Activated T-helper 2 cell treated with anti-CD3 and anti-CD28 coated beads, Interferon-gamma antibody, Interleukin-2, Interleukin-4, amounts not matched to agents 10 μg/mL and 5 μg/mL and 100 μg/mL, durations not matched to agents 14 hours and 24 hours and 36 hours (primary cell): ENCODE measurements at regions of chr4 and their contacts with region 1.

Region 1: GRCh38 chr4:151099229-151099975 is at the start of gene RPS3A:
- DNase-seq: peak; percentile 98
- H3K4me3 Mint-ChIP-seq: peak within 1 kb of the TSS; percentile 98
- H3K27ac Mint-ChIP-seq: peak within 1 kb of the TSS; percentile 97
- H3K4me1 Mint-ChIP-seq: peaks cover 45% of the 10 kb centered on the region
- H3K27me3 Mint-ChIP-seq: no peaks in the 10 kb centered on the region
- total RNA-seq, gene RPS3A: 1,827 and 1,844 TPM in 2 replicates

Region 2: DNA sequence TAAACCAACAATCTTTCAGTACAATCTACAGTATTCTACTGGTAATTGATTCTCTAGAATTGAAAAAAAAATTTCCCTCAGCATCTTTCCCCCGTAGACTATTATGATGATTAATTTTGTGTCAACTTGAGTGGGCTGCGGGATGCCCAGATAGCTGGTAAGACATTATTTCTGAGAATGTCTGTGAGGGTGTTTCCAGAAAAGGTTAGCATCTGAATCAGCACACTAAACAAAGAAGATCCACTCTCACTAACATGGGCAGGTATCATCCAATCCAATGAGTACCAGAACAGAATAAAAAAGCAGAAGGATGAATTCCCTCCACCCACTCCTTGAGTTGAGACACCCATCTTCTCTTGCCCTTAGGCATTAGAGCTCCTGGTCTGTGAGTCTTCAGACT is 703.5 kb before region 1 on chr4:
- intact Hi-C with region 1: loop called (anchors 5 kb)
- DNase-seq: no peak
- H3K4me3 Mint-ChIP-seq: no peak overlapping the region
- H3K27ac Mint-ChIP-seq: peak overlapping the region; percentile 84
- H3K4me1 Mint-ChIP-seq: peaks cover 17% of the 10 kb centered on the region
- H3K27me3 Mint-ChIP-seq: no peaks in the 10 kb centered on the region

Region 3: DNA sequence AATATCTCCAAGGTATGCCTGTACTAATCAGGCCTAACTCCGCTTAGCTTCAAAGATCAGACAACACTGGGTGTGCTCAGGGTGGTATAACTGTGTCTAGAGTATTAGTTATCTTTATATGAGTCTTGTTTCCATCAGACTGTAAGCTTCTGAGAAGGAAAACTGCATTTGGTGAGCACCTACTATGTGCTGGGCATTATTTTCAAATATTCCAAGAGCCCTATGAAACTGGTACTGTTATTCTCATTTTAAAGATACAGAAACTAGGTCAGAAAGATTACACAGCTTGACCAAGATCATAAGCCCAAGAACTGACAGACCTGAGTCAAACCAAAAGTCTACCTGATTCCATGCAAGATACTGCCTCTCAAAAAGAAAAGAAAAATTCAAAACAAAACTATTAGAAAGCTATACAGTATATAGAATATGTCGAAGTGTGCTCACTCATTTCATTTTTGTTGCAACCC is 128.7 kb before region 1 on chr4:
- intact Hi-C with region 1: loop called (anchors 2 kb)
- DNase-seq: no peak
- H3K4me3 Mint-ChIP-seq: no peak overlapping the region
- H3K27ac Mint-ChIP-seq: peak overlapping the region; percentile 68
- H3K4me1 Mint-ChIP-seq: peaks cover 40% of the 10 kb centered on the region
- H3K27me3 Mint-ChIP-seq: no peaks in the 10 kb centered on the region

Region 4: DNA sequence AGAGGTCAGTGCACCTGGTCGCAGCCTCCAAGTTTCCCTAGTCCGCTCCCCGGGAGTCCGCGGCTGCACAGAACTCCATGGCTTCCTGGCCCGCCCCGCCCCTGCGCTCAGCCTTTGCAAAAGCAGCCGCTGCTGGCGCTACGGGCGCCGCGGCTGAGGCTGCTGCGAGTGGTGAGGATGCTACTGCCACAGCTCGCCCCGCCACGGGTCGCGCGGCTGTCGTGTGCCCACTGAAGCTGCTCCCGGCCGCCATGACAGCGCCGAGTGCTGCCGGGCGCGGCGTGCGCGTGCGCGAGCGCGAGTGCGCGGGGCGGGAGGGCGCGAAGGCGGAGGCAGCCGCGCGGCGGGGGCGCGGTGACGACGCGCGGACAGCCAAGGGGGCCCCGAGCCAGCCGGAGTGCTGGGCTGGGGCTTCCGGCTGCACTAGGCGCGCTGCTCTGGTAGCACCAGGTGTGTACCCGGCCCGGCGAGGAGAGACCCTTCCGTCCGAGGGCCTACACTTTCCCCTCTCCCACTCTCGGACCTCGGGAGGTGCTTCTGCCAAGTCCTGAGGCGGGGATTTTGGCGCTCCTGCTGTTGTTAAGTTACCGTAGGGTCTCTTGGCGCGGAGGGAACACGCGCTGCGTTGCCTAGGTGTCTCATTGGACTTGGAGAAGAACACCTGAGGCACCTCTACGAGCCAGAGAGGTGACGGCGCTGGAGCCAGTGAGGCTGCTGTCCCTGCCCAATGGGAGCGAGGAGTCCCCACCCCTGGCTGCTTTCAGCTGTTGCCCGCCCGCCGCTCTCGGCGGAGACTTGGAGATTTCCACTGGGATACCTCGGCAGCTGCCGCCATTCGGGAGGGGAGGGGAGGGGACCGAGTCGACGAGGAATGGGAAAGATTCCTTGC is 83.7 kb before region 1 on chr4:
- intact Hi-C with region 1: loop called (anchors 1 kb)
- DNase-seq: peak; percentile 76
- H3K4me3 Mint-ChIP-seq: peak overlapping the region; percentile 100
- H3K27ac Mint-ChIP-seq: peak overlapping the region; percentile 99
- H3K4me1 Mint-ChIP-seq: peaks cover 16% of the 10 kb centered on the region
- H3K27me3 Mint-ChIP-seq: no peaks in the 10 kb centered on the region

Region 5: GRCh38 chr4:151031831-151032605 is 67.4 kb before region 1 on chr4:
- intact Hi-C with region 1: loop called (anchors 1 kb)
- DNase-seq: no peak
- H3K4me3 Mint-ChIP-seq: peak overlapping the region; percentile 65
- H3K27ac Mint-ChIP-seq: peak overlapping the region; percentile 81
- H3K4me1 Mint-ChIP-seq: peaks cover 26% of the 10 kb centered on the region
- H3K27me3 Mint-ChIP-seq: no peaks in the 10 kb centered on the region

Region 6: DNA sequence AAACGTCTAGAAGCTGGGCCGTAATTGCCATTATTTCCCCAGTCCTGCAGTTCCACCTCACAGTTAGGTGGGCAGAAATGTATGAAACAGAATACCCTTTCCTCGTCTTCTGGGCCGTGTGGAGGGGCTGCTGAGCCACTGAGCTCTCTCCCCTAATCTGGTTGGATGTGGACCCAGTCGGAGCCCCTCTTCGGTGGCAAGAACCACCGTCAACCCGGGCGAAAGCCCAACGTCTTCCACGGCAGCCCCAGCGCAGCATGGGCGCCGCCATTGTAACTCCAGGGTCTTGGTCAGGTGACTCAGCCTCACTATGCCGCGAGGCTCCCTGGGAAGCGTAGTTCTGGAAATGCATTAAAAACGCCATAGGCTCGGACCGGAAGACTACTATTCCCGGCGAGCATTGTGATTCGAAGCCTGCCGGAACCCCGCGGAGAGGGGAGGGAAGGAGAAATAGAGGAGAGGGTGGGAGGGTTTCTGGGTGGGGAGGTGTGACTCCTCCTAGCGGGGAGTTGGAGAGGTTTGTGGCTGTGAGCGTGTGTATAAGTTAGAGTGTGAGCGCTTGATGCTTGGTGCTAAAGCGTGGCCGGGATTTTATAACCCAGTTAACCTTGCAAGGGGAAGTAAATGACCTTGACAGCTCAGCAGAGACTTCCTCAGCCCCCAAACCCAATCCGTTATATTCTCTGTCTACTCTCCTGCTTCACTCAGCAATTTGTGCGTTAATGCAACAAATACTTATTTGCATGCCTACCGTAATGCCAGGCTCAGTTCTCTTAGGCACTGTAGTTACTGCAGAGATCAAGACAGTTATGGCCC is 661.5 kb after region 1 on chr4 and contains the start of gene GATB:
- intact Hi-C with region 1: loop called (anchors 1 kb)
- DNase-seq: peak; percentile 88
- H3K4me3 Mint-ChIP-seq: peak within 1 kb of the TSS; percentile 100
- H3K27ac Mint-ChIP-seq: peak within 1 kb of the TSS; percentile 99
- H3K4me1 Mint-ChIP-seq: peaks cover 12% of the 10 kb centered on the region
- H3K27me3 Mint-ChIP-seq: peaks cover 2% of the 10 kb centered on the region
- total RNA-seq, gene GATB: 17.7 and 19.6 TPM in 2 replicates

Region 7: GRCh38 chr4:152779513-152780266 is 1680.3 kb after region 1 on chr4 and contains the starts of genes ARFIP1 and TIGD4:
- intact Hi-C with region 1: loop called (anchors 1 kb)
- DNase-seq: peak; percentile 95
- H3K4me3 Mint-ChIP-seq: peak within 1 kb of the TSS; percentile 96
- H3K27ac Mint-ChIP-seq: peak within 1 kb of the TSS; percentile 94
- H3K4me1 Mint-ChIP-seq: peaks cover 42% of the 10 kb centered on the region
- H3K27me3 Mint-ChIP-seq: peaks cover 20% of the 10 kb centered on the region
- total RNA-seq, gene ARFIP1: 16.6 and 16.7 TPM in 2 replicates
- total RNA-seq, gene TIGD4: 0.23 and 0.28 TPM in 2 replicates